Mammary epithelial cell (primary cell): ENCODE measurements at regions of chrX and their contacts with region 1.

Region 1: DNA sequence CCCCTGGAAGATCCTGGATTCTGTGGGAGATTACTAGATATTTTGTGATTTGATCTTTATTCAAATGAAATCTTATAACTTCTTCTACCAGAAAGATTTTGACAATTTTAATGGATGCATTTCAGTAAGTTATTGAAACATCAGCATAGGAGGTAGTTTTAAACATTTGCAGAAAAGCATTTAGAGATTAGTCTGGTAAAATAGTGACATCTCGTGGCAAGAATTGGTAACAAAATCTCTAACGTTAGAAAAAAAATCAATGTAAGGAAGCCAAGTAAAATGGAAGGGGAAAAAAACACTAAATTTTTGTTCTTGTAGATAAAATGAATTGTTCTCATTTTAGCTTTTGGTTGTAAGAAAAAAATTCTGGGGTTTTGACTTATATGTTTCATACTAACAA is 73.3 kb downstream of the TASL start:
- DNase-seq: peak; percentile 8
- H3K4me3 ChIP-seq: no peak overlapping the region
- H3K27ac ChIP-seq: no peak overlapping the region
- H3K4me1 ChIP-seq: no peaks in the 10 kb centered on the region
- H3K27me3 ChIP-seq: no peaks in the 10 kb centered on the region
- CTCF ChIP-seq: peak; percentile 37 to 55

Region 2: GRCh38 chrX:30141966-30142365 is 362.3 kb before region 1 on chrX:
- CTCF ChIA-PET with region 1: interaction called, 3 read pairs
- dilution Hi-C with region 1: no loop called
- in situ Hi-C with region 1: loop called in 1 of 2 experiments (anchors 25 kb)
- intact Hi-C with region 1: loop called (anchors 5 kb)
- DNase-seq: peak; percentile 24
- H3K4me3 ChIP-seq: no peak overlapping the region
- H3K27ac ChIP-seq: no peak overlapping the region
- H3K4me1 ChIP-seq: no peaks in the 10 kb centered on the region
- H3K27me3 ChIP-seq: peaks cover 4% of the 10 kb centered on the region
- CTCF ChIP-seq: peak; percentile 36 to 61

Region 3: DNA sequence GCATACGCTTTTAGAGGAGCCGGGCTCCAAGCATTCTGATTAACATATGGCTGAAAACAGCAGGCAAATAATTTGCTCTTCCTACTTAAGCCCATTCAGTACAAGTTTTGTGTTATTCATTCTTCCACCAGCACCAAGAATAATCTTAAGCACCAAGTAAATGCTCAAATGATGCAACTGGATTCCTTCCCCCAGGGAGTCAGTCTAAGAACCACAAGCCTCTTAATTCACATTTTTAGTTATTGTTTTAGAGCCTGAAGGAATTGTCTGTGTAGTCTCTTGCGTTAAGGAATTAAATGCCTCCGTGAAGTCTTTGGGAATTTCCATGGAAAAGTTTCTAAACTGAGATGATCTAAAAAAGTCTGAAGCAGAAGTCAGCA is 350.4 kb before region 1 on chrX:
- CTCF ChIA-PET with region 1: no interaction called
- dilution Hi-C with region 1: no loop called
- in situ Hi-C with region 1: loop called (anchors 25 kb)
- intact Hi-C with region 1: no loop called
- DNase-seq: no peak
- H3K4me3 ChIP-seq: no peak overlapping the region
- H3K27ac ChIP-seq: no peak overlapping the region
- H3K4me1 ChIP-seq: no peaks in the 10 kb centered on the region
- H3K27me3 ChIP-seq: peaks cover 2% of the 10 kb centered on the region
- CTCF ChIP-seq: no peak

Region 4: DNA sequence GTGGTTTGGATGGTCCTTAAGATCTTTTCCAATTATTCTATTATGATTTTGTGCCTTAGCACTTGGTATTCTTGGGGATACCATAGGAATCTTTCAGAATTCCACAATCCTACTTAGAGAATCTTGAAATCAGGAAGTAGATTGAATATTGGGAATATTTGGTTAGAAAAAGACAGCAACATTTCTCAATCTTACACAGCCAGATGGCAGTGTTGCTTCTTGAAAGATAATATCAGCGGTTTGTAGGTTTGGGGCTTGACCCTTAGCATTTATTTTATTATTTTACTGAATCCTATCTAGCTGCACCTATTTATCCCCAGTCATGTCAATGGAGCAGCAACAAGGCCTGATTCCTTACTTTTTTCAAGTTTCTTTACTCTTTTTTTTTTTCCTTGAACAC is 228.8 kb before region 1 on chrX:
- CTCF ChIA-PET with region 1: no interaction called
- dilution Hi-C with region 1: no loop called
- in situ Hi-C with region 1: loop called (anchors 5 to 10 kb)
- intact Hi-C with region 1: loop called (anchors 1 kb)
- DNase-seq: peak; percentile 6
- H3K4me3 ChIP-seq: no peak overlapping the region
- H3K27ac ChIP-seq: no peak overlapping the region
- H3K4me1 ChIP-seq: no peaks in the 10 kb centered on the region
- H3K27me3 ChIP-seq: peaks cover 2% of the 10 kb centered on the region
- CTCF ChIP-seq: peak; percentile 39 to 52

Region 5: DNA sequence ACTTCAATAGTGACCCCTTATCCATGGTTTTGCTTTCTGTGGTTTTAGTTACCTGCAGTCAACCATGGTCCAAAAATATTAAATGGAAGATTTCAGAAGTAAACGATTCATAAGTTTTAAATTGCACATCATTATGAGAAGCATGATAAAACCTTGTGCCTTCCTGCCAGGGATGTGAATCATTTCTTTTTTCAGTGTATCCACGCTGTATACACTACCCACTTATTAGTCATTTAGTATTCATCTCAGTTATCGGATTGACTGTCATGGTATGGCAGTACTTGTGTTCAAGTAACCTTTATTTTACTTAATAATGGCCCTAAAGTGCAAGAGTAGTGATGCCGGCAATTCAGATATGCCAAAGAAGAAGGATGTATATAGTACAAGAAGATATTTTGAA is 110.9 kb after region 1 on chrX:
- CTCF ChIA-PET with region 1: no interaction called
- dilution Hi-C with region 1: no loop called
- in situ Hi-C with region 1: no loop called
- intact Hi-C with region 1: no loop called
- DNase-seq: peak; percentile 43
- H3K4me3 ChIP-seq: no peak overlapping the region
- H3K27ac ChIP-seq: no peak overlapping the region
- H3K4me1 ChIP-seq: no peaks in the 10 kb centered on the region
- H3K27me3 ChIP-seq: no peaks in the 10 kb centered on the region
- CTCF ChIP-seq: no peak